AG04450 (cell line): ENCODE measurements at regions of chr10 and their contacts with region 1.

Region 1: GRCh38 chr10:127067542-127068194 is 128.7 kb downstream of the INSYN2A start:
- DNase-seq: no peak
- H3K4me3 ChIP-seq: no peak overlapping the region
- H3K27ac ChIP-seq: no peak overlapping the region
- H3K27me3 ChIP-seq: no peaks in the 10 kb centered on the region
- CTCF ChIP-seq: no peak

Region 2: GRCh38 chr10:126913280-126913679 is 154.4 kb before region 1 on chr10:
- CTCF ChIA-PET with region 1: interaction called, 16 read pairs
- POLR2A ChIA-PET with region 1: no interaction called
- DNase-seq: no peak
- H3K4me3 ChIP-seq: no peak overlapping the region
- H3K27ac ChIP-seq: no peak overlapping the region
- H3K27me3 ChIP-seq: no peaks in the 10 kb centered on the region
- CTCF ChIP-seq: no peak

Region 3: DNA sequence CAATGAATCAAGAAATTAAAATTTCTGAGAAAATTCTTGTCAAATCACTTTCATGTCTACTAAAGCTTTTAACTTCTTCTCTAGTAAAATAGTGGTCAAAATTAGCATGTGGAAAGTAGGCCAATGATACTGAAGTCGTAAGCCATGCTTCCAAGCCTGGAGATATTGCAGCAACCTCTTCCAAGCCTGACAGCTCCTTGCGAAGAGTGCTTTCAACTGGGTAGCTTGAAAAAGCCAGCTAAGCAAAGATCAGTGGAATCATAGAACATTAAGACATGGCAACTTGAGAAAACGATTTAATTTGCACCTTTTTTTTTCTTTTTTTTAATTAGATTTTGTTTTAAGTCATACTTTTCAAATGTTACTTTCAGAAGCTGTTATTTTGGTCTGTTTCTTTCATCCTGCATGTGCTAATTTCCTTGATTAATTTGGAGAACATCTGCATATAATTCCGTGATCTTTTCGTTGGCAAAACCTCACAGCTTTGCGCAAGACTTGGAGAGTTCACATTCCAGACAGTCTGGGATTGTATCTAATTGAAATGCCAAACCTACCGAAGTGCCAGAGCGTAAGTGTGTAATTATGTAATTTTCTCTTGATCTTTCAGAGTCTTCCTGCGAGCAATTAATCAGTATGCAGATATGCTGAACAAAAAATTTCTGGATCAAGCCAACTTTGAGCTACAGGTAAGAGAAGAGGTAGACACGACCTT is 270.9 kb after region 1 on chr10:
- CTCF ChIA-PET with region 1: no interaction called
- POLR2A ChIA-PET with region 1: no interaction called
- DNase-seq: no peak
- H3K4me3 ChIP-seq: no peak overlapping the region
- H3K27ac ChIP-seq: no peak overlapping the region
- H3K27me3 ChIP-seq: no peaks in the 10 kb centered on the region
- CTCF ChIP-seq: no peak